ENCODE measurements at regions of chr22 and their contacts with region 1.

Region 1: GRCh38 chr22:26023104-26023775 is 146.0 kb upstream of the SEZ6L start:
- DNase-seq: no peak
- H3K4me3 Mint-ChIP-seq: no peak overlapping the region
- H3K27ac Mint-ChIP-seq: no peak overlapping the region
- H3K4me1 Mint-ChIP-seq: no peaks in the 10 kb centered on the region
- H3K27me3 Mint-ChIP-seq: peaks cover 45% of the 10 kb centered on the region
- CTCF ChIP-seq: no peak

Region 2: GRCh38 chr22:25668437-25668836 is 354.8 kb before region 1 on chr22:
- CTCF ChIA-PET with region 1: no interaction called
- intact Hi-C with region 1: no loop called
- DNase-seq: peak; percentile 6
- H3K4me3 Mint-ChIP-seq: no peak overlapping the region
- H3K27ac Mint-ChIP-seq: no peak overlapping the region
- H3K4me1 Mint-ChIP-seq: no peaks in the 10 kb centered on the region
- H3K27me3 Mint-ChIP-seq: no peaks in the 10 kb centered on the region
- CTCF ChIP-seq: no peak

Region 3: DNA sequence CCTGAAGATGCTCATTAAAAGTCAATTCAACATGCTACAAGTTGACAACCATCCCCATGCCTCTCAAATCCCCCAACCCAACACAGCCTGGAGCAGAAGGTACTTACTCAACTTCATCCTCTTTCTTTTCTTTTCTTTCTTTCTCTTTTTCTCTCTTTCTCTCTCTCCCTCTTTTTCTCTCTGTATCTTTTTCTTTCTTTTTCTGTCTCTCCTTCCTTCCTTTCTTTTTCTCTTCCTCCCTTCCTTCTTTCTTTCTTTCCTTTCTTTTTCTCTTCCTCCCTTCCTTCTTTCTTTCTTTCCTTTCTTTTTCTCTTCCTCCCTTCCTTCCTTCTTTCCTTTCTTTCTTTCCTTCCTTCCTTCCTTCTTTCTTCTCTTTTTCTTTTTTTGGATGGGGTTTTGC is 10.3 kb after region 1 on chr22:
- CTCF ChIA-PET with region 1: interaction called, 14 read pairs
- intact Hi-C with region 1: no loop called
- DNase-seq: no peak
- H3K4me3 Mint-ChIP-seq: no peak overlapping the region
- H3K27ac Mint-ChIP-seq: no peak overlapping the region
- H3K4me1 Mint-ChIP-seq: no peaks in the 10 kb centered on the region
- H3K27me3 Mint-ChIP-seq: peaks cover 37% of the 10 kb centered on the region
- CTCF ChIP-seq: no peak